Pancreas (tissue), 10 donors: ENCODE measurements at regions of chr6 and their contacts with region 1.

Region 1: GRCh38 chr6:63458480-63459115 is 113.7 kb upstream of the LOC128125822 start:
- DNase-seq: no peak
- ATAC-seq: peak; percentile 92 to 98 (median 95)
- H3K4me3 ChIP-seq: peak overlapping the region in 2 of 4 donors; percentile 18 to 25
- H3K27ac ChIP-seq: peak overlapping the region; percentile 65 to 97 (median 85)
- H3K4me1 ChIP-seq: peaks cover 13 to 35% (median 32%) of the 10 kb centered on the region in 3 donors
- H3K27me3 ChIP-seq: no peaks in the 10 kb centered on the region
- CTCF ChIP-seq: no peak

Region 2: DNA sequence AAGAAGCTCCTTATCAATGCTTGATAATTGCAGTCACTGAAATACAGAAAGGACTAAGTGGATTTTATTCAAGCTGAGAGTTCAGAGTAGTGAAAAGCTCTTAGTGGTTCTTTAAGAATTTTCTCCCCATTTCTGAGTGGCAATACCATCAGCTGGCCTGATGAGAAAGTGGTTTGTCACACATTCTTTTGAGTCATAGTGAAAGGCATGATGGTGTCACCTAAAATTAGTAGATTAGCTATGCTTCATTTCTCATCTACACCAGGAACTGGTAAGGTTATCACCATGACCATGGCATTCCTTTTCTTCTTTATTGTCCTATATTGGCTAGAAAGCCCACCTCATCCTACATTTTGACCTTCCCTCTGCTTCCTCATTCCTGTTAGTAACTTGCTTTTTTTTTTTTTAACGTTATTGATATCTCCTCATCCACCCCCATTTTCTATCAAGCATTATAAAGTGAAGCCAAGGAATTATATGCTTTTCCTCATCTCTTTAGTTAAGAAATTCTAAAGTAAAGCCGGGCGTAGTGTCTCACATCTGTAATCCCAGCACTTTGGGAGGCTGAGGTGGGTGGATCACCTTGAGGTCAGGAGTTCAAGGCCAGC is 46.3 kb after region 1 on chr6:
- intact Hi-C with region 1: no loop called
- DNase-seq: no peak
- ATAC-seq: no peak
- H3K4me3 ChIP-seq: no peak overlapping the region
- H3K27ac ChIP-seq: no peak overlapping the region
- H3K4me1 ChIP-seq: peaks cover 0 to 19% (median 5%) of the 10 kb centered on the region in 3 donors
- H3K27me3 ChIP-seq: no peaks in the 10 kb centered on the region
- CTCF ChIP-seq: no peak

Region 3: GRCh38 chr6:63527658-63528514 is 69.3 kb after region 1 on chr6:
- intact Hi-C with region 1: loop called in 1 of 3 experiments (anchors 10 kb)
- DNase-seq: peak in 4 of 6 donors; percentile 66 to 90 (median 71)
- ATAC-seq: peak; percentile 92 to 97 (median 96)
- H3K4me3 ChIP-seq: peak overlapping the region in 1 of 4 donors; percentile 8
- H3K27ac ChIP-seq: peak overlapping the region in 3 of 4 donors; percentile 1 to 84 (median 70)
- H3K4me1 ChIP-seq: peaks cover 5 to 21% (median 7%) of the 10 kb centered on the region in 3 donors
- H3K27me3 ChIP-seq: no peaks in the 10 kb centered on the region
- CTCF ChIP-seq: no peak

Region 4: DNA sequence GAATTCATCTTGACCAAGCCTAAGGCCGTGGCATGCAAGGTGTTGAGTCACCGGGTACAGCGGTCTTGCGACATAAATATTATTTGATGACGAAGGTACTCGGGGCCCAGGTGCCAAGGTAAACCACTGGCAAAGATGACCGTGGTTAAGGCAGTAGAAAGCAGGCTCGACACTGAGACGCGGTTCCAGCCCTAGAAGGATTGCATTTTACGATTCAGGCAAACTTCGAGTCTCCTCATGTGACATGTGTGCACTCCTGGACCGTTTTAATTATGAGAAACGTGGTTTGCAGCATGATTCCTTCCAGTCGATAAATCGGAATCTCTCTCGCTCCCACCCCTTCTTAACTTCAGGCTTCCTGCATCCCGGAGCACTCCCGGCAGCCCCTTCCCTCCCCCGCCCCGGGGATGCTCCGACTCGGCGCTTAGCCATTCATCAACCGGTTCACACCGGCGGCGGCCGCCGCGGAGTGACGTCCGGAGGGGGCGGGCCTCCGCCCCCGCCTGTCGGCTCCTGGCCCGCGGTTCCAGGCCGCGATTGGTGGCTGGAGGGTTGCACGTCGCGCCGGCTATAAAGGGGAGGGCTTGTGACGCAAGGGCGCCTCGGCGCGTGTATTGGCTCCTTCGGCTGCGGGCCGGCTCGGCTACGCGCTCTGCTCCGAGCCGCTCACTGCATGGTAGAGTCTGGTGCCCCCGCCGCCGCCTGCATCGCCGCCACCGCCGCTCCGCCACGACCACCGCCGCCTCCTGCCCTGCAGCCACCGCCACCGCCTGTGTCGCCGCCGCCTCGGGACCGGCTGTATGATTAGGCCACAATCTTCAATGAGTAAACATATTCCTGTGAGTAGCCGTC is 113.5 kb after region 1 on chr6 and contains the starts of genes LOC128125822 and PTP4A1:
- intact Hi-C with region 1: loop called in 1 of 3 experiments (anchors 5 kb)
- DNase-seq: peak; percentile 97 to 99 (median 98)
- ATAC-seq: peak; percentile 68 to 86 (median 82)
- H3K4me3 ChIP-seq: peak within 1 kb of the TSS; percentile 77 to 98 (median 86)
- H3K27ac ChIP-seq: peak within 1 kb of the TSS; percentile 100
- H3K4me1 ChIP-seq: peaks cover 22 to 29% (median 29%) of the 10 kb centered on the region in 3 donors
- H3K27me3 ChIP-seq: no peaks in the 10 kb centered on the region
- CTCF ChIP-seq: no peak
- total RNA-seq, gene PTP4A1: 24.8 to 77.8 (median 40.7) TPM